ENCODE measurements at regions of chr12 and their contacts with region 1.

Region 1: DNA sequence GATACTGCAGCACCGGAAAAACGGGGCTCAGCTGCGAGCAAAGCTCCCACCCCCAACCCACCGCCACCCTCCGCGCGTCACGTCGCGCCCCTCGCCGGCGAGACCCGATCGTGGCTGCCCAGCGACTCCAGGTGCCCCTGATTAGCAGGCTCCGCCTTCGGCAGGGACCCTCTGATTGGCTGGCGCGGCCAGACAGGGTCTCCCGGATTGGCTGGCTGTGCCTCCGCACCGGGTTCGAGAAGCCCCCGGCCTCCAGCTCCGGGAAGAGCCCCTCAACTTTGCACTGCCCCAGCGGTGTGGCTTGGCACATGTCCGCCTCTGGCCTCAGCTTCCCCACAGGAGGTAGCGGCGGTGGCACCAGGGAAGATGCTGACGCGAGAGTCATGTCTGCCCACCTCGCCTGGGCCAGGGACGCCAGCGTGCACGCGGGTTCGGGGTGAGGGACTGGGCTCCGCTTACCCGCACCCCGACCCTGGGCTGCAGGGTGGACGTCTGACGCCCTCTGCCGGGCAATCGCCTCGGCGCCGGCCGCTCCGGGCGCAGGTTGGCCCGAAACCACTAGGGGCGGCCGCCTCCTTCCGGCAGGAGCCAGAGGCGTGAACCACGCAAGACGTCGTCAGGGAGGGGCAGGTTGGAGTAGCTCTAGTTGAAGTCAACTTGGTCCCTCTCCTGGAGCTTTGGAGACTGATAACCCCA is 498 bp upstream of the RHOF start:
- DNase-seq: peak; percentile 97 to 98
- ATAC-seq: peak; percentile 48 to 81 (median 59)
- H3K4me3 ChIP-seq: peak overlapping the region; percentile 86
- H3K4me3 Mint-ChIP-seq: peak overlapping the region; percentile 95
- H3K27ac ChIP-seq: peak overlapping the region; percentile 68
- H3K27ac Mint-ChIP-seq: peak overlapping the region; percentile 100
- H3K4me1 ChIP-seq: peaks cover 70% of the 10 kb centered on the region
- H3K4me1 Mint-ChIP-seq: peaks cover 60 to 72% of the 10 kb centered on the region in 2 donors
- H3K27me3 ChIP-seq: no peaks in the 10 kb centered on the region
- H3K27me3 Mint-ChIP-seq: no peaks in the 10 kb centered on the region
- CTCF ChIP-seq: peak; percentile 97

Region 2: DNA sequence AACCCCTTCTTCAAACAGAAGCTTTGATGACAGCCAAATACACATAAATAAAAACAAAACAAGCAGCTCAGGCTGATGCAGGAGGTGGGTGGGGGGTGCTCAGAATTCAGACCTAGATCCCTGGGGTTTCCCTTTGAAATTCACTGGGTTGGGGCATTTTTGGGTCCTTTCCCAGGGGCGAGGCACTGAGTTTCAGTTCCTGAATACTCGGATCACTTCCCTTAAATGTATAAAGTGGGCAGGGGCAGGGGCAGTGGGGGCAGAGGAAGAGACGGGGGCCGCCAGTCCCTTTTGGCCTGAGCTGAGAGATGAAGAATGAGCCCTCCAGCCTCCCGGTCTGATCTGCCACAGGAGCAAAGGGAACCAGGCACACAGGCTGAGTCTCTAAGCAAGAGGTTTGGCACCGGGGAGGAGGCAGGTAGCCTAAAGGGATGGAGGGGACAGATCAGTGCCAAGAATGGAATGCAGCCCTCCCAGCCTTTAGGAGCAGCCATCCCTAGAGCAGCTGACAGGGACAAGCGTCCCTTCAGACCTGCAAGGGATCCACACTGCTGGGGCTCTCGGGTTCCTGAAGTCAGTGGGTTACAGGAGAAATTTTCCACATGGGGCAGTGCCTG is 233.5 kb before region 1 on chr12:
- intact Hi-C with region 1: loop called (anchors 5 kb)
- DNase-seq: peak in 1 of 2 donors; percentile 25
- ATAC-seq: no peak
- H3K4me3 ChIP-seq: no peak overlapping the region
- H3K4me3 Mint-ChIP-seq: no peak overlapping the region
- H3K27ac ChIP-seq: no peak overlapping the region
- H3K27ac Mint-ChIP-seq: peak overlapping the region; percentile 80 to 96
- H3K4me1 ChIP-seq: peaks cover 34% of the 10 kb centered on the region
- H3K4me1 Mint-ChIP-seq: peaks cover 10 to 25% of the 10 kb centered on the region in 2 donors
- H3K27me3 ChIP-seq: no peaks in the 10 kb centered on the region
- H3K27me3 Mint-ChIP-seq: no peaks in the 10 kb centered on the region
- CTCF ChIP-seq: no peak

Region 3: GRCh38 chr12:121697098-121697698 is 96.8 kb before region 1 on chr12:
- intact Hi-C with region 1: loop called (anchors 1 kb)
- DNase-seq: peak in 1 of 2 donors; percentile 80
- ATAC-seq: peak in 2 of 3 donors; percentile 39 to 49
- H3K4me3 ChIP-seq: no peak overlapping the region
- H3K4me3 Mint-ChIP-seq: no peak overlapping the region
- H3K27ac ChIP-seq: no peak overlapping the region
- H3K27ac Mint-ChIP-seq: no peak overlapping the region
- H3K4me1 ChIP-seq: no peaks in the 10 kb centered on the region
- H3K4me1 Mint-ChIP-seq: no peaks in the 10 kb centered on the region
- H3K27me3 ChIP-seq: no peaks in the 10 kb centered on the region
- H3K27me3 Mint-ChIP-seq: peaks cover 0 to 3% of the 10 kb centered on the region in 2 donors
- CTCF ChIP-seq: peak; percentile 79

Region 4: DNA sequence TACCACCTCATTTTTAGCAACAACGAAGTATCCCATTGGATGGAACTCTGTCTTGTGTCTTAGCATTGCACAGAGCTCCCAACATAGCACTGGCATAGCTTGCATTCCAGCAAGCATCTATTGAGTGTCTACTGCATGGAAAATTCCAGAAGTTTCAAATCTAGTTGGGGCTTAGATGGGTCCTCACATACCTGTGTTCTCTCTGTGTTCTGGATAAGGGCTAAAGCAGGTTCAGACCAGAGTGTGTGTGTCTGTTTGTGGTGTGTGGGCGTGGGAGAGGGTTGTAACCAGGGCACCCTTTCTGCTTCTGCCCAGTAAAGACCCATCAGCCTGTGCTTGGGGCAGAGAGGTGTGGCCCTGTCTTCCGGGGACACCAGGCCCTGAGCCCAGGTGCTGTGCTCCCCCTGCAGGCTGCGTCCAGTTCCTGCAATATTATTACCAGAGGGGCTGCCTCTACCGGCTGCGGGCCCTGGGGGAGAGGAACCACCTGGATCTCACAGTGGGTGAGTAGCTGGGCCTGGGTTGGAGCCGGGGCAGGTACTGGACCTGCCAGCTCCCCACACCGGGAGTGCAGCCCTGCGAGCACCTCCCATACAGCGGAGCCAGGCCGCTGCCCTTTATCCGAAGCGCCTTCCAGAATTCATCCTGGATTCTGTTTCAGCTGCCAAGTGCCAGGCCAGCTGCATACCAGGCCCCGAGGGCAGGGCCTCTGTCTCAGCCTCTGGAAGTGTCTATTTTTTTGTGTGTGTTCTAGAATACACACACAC is 20.8 kb before region 1 on chr12:
- intact Hi-C with region 1: loop called (anchors 1 kb)
- DNase-seq: peak; percentile 76 to 90
- ATAC-seq: peak; percentile 79 to 91 (median 89)
- H3K4me3 ChIP-seq: no peak overlapping the region
- H3K4me3 Mint-ChIP-seq: no peak overlapping the region
- H3K27ac ChIP-seq: no peak overlapping the region
- H3K27ac Mint-ChIP-seq: no peak overlapping the region
- H3K4me1 ChIP-seq: peaks cover 21% of the 10 kb centered on the region
- H3K4me1 Mint-ChIP-seq: peaks cover 7 to 14% of the 10 kb centered on the region in 2 donors
- H3K27me3 ChIP-seq: no peaks in the 10 kb centered on the region
- H3K27me3 Mint-ChIP-seq: no peaks in the 10 kb centered on the region
- CTCF ChIP-seq: peak; percentile 89

Region 5: GRCh38 chr12:121811434-121812319 is 17.7 kb after region 1 on chr12:
- intact Hi-C with region 1: loop called (anchors 1 kb)
- DNase-seq: peak; percentile 78 to 83
- ATAC-seq: peak; percentile 91 to 94 (median 93)
- H3K4me3 ChIP-seq: peak overlapping the region; percentile 39
- H3K4me3 Mint-ChIP-seq: peak overlapping the region; percentile 85
- H3K27ac ChIP-seq: peak overlapping the region; percentile 22
- H3K27ac Mint-ChIP-seq: peak overlapping the region; percentile 63 to 67
- H3K4me1 ChIP-seq: peaks cover 54% of the 10 kb centered on the region
- H3K4me1 Mint-ChIP-seq: peaks cover 30 to 53% of the 10 kb centered on the region in 2 donors
- H3K27me3 ChIP-seq: no peaks in the 10 kb centered on the region
- H3K27me3 Mint-ChIP-seq: no peaks in the 10 kb centered on the region
- CTCF ChIP-seq: peak; percentile 99

Region 6: GRCh38 chr12:121917979-121918678 is 124.1 kb after region 1 on chr12 and contains the start of gene CFAP251:
- intact Hi-C with region 1: no loop called
- DNase-seq: peak; percentile 95 to 98
- ATAC-seq: peak; percentile 98 to 99 (median 98)
- H3K4me3 ChIP-seq: peak within 1 kb of the TSS; percentile 35
- H3K4me3 Mint-ChIP-seq: peak within 1 kb of the TSS; percentile 88
- H3K27ac ChIP-seq: peak within 1 kb of the TSS; percentile 50
- H3K27ac Mint-ChIP-seq: peak within 1 kb of the TSS; percentile 88 to 91
- H3K4me1 ChIP-seq: peaks cover 13% of the 10 kb centered on the region
- H3K4me1 Mint-ChIP-seq: peaks cover 9 to 12% of the 10 kb centered on the region in 2 donors
- H3K27me3 ChIP-seq: no peaks in the 10 kb centered on the region
- H3K27me3 Mint-ChIP-seq: no peaks in the 10 kb centered on the region
- CTCF ChIP-seq: peak; percentile 74
- total RNA-seq, gene CFAP251: 0.59 to 0.80 (median 0.59) TPM

Region 7: DNA sequence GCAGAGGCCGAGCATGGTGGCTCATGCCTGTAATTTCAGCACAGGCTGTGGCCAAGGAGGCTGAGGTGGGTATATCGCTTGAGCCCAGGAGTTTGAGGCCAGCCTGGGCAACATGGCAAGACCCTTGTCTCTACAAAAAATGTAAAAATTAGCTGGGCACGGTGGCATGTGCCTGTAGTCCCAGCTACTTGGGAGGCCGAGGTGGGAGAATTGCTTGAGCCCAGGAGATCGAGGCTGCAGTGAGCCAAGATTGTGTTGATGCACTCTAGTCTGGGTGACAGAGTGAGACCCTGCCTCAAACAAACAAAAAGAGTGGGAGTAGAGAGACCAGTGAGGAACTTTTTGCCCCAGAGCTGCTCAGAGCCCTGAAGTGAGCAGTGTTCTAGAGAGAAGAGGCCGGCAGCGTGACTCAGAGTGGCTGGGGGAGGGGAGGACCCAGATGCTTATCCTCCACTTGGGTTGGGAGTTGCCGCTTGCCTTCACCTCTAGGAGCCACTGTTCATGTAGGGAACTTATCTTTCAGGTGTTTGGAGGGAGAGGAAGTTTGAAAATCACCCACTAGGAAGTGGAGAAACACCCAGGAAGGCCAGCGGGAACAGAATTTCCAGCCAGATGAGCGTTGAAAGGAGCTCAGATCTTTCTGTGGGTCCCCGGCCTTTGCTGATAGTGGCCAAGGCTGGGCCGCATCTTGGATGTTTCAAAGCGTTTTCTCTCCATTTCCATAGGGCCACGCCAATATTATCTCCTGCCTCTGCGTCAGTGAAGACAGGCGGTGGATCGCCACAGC is 139.7 kb after region 1 on chr12:
- intact Hi-C with region 1: no loop called
- DNase-seq: no peak
- ATAC-seq: no peak
- H3K4me3 ChIP-seq: no peak overlapping the region
- H3K4me3 Mint-ChIP-seq: no peak overlapping the region
- H3K27ac ChIP-seq: no peak overlapping the region
- H3K27ac Mint-ChIP-seq: no peak overlapping the region
- H3K4me1 ChIP-seq: no peaks in the 10 kb centered on the region
- H3K4me1 Mint-ChIP-seq: peaks cover 0 to 6% of the 10 kb centered on the region in 2 donors
- H3K27me3 ChIP-seq: no peaks in the 10 kb centered on the region
- H3K27me3 Mint-ChIP-seq: peaks cover 0 to 4% of the 10 kb centered on the region in 2 donors
- CTCF ChIP-seq: no peak

Measured in natural killer cell (primary cell).